PC-3 (cell line): ENCODE measurements at regions of chr5 and their contacts with region 1.

Region 1: GRCh38 chr5:14168144-14168792 is 25.1 kb downstream of the TRIO start:
- DNase-seq: peak; percentile 57
- ATAC-seq: no peak
- H3K4me3 ChIP-seq: no peak overlapping the region
- H3K27ac ChIP-seq: peak overlapping the region; percentile 19; the same call in 1 of the 2 replicates
- H3K4me1 ChIP-seq: peaks cover 79% of the 10 kb centered on the region
- H3K27me3 ChIP-seq: no peaks in the 10 kb centered on the region
- CTCF ChIP-seq: no peak

Region 2: GRCh38 chr5:14081791-14082190 is 86.5 kb before region 1 on chr5:
- CTCF ChIA-PET with region 1: no interaction called
- POLR2A ChIA-PET with region 1: no interaction called
- intact Hi-C with region 1: no loop called
- DNase-seq: peak; percentile 45
- ATAC-seq: no peak
- H3K4me3 ChIP-seq: no peak overlapping the region
- H3K27ac ChIP-seq: no peak overlapping the region
- H3K4me1 ChIP-seq: no peaks in the 10 kb centered on the region
- H3K27me3 ChIP-seq: no peaks in the 10 kb centered on the region
- CTCF ChIP-seq: no peak

Region 3: DNA sequence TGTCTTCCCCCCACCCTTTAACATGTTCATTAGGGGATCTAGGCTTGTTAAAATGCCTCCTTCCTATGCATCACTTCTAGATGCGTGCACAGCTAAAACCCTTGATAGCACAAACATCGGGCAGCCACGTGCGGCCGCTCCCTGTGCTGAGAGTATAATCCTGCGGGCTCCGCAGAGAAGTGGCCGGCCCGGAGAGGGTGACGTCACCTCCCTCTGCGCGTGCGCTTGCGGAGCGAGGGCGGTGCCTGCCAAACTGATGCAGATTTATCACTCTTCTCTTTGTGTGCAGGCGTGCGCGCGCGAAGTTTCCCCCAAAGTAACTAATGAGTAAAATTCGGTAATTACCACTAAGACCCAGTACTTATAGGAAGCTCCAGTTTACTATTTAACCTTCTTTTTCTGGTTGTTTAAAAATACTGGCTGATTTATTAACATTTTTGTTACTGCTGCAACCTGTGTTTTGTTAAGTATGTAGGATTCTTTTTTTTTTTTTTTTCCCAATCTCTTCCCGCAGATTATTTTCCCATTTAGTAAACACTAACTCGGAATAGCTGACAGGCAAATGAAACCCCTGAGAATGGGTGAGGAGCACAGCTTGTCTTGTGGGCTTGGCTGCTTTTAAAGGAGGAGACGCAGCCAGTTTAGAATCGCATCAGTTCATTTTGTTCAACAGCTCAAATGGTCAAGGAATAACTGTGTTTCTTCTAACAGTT is 96.5 kb after region 1 on chr5:
- CTCF ChIA-PET with region 1: no interaction called
- POLR2A ChIA-PET with region 1: interaction called, 11 read pairs
- intact Hi-C with region 1: no loop called
- DNase-seq: peak; percentile 99
- ATAC-seq: peak; percentile 59
- H3K4me3 ChIP-seq: peak overlapping the region; percentile 58
- H3K27ac ChIP-seq: peak overlapping the region; percentile 96
- H3K4me1 ChIP-seq: peaks cover 74% of the 10 kb centered on the region
- H3K27me3 ChIP-seq: no peaks in the 10 kb centered on the region
- CTCF ChIP-seq: no peak